A673 (cell line): ENCODE measurements at regions of chr3 and their contacts with region 1.

Region 1: DNA sequence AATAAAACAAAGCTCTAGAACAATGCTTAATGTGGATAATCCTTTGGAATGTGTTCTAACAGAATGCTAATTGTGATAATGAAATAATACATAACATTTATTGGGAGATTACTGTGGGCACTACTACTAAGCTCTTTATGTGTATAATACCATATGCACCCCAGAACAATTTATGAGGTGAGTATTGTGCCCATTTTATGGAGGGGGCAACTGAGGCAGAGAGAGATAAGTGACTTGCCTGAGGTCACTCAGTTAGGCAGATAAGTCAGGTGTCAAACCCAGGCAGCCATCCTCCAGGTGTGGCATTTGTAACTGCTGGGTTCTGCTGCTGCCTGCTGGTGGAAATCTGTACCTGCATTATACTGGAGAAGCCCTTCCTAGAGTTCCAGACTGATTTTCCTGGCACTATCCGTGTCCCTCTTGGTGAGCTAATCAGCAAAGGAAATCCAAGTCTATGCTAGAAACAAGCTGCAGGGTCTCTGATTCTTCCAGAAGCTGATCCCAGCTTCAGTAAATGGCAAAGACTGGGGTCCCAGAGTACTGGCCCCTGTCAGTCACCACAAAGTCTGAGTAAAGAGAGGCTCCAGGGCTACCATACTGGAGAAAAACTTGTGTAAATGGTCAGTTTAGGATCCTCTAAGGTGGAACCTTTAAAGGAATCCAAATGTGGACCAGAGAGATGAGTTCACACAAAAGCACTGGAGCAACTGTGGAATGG is 22.6 kb upstream of the RBP1 start:
- DNase-seq: no peak
- H3K4me3 ChIP-seq: no peak overlapping the region
- H3K27ac ChIP-seq: no peak overlapping the region
- H3K4me1 ChIP-seq: no peaks in the 10 kb centered on the region
- H3K27me3 ChIP-seq: no peaks in the 10 kb centered on the region
- CTCF ChIP-seq: peak; percentile 77

Region 2: GRCh38 chr3:138455801-138456716 is 1106.1 kb before region 1 on chr3:
- CTCF ChIA-PET with region 1: no interaction called
- POLR2A ChIA-PET with region 1: no interaction called
- intact Hi-C with region 1: no loop called
- DNase-seq: no peak
- H3K4me3 ChIP-seq: no peak overlapping the region
- H3K27ac ChIP-seq: no peak overlapping the region
- H3K4me1 ChIP-seq: no peaks in the 10 kb centered on the region
- H3K27me3 ChIP-seq: no peaks in the 10 kb centered on the region
- CTCF ChIP-seq: no peak

Region 3: DNA sequence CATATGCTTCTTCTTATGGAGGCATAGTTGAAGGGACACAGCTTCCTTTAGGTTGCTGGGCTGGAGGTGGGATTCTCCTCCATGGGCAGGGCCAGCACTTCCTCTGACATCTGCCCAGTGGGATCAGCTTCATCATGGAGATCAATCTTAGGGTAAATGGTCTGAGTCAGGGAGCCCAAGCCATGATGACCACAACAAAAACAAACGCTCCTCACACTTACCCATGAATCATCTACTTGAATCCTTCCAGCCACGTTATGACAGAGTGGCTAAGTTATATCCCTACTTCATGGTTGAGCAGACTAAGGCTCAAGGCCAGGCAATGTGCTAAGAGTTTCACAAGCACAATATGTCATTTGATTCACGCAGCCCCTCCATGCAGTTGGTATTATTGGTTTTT is 202.8 kb after region 1 on chr3:
- CTCF ChIA-PET with region 1: no interaction called
- POLR2A ChIA-PET with region 1: no interaction called
- intact Hi-C with region 1: no loop called
- DNase-seq: no peak
- H3K4me3 ChIP-seq: no peak overlapping the region
- H3K27ac ChIP-seq: no peak overlapping the region
- H3K4me1 ChIP-seq: no peaks in the 10 kb centered on the region
- H3K27me3 ChIP-seq: no peaks in the 10 kb centered on the region
- CTCF ChIP-seq: no peak

Region 4: DNA sequence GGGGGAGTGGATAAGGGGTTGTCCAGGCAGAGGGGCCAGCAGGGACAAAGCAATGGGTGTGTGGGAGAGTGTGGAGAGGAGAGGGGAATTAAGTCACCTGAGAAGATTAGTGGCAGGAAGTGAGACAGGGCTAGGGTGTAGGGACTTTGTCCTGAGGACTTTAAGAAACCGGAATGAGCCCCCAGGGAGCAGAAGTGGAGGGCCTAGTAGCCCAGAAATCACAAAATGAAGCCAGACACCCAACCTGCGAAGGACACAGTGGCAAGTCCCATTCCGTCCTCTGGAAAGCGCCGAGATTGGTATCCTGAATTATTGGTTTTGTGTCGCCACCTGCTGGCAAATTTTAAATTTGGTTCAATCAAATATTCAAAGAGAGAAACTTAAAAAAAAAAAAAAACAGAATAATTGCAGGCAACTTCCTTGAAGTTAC is 1301.5 kb after region 1 on chr3:
- CTCF ChIA-PET with region 1: no interaction called
- POLR2A ChIA-PET with region 1: no interaction called
- intact Hi-C with region 1: loop called (anchors 5 kb)
- DNase-seq: peak; percentile 82
- H3K4me3 ChIP-seq: no peak overlapping the region
- H3K27ac ChIP-seq: no peak overlapping the region
- H3K4me1 ChIP-seq: no peaks in the 10 kb centered on the region
- H3K27me3 ChIP-seq: no peaks in the 10 kb centered on the region
- CTCF ChIP-seq: peak; percentile 67